ENCODE measurements at regions of chr1 and their contacts with region 1.

Region 1: GRCh38 chr1:22930235-22930912 is 42.3 kb downstream of the LACTBL1 start:
- DNase-seq: peak in 1 of 3 donors; percentile 15
- H3K4me3 ChIP-seq: no peak overlapping the region
- H3K4me3 Mint-ChIP-seq: no peak overlapping the region
- H3K27ac ChIP-seq: no peak overlapping the region
- H3K27ac Mint-ChIP-seq: no peak overlapping the region
- H3K4me1 ChIP-seq: no peaks in the 10 kb centered on the region
- H3K4me1 Mint-ChIP-seq: no peaks in the 10 kb centered on the region
- H3K27me3 ChIP-seq: no peaks in the 10 kb centered on the region
- H3K27me3 Mint-ChIP-seq: peaks cover 7 to 12% (median 10%) of the 10 kb centered on the region in 3 donors
- CTCF ChIP-seq: peak; percentile 74

Region 2: DNA sequence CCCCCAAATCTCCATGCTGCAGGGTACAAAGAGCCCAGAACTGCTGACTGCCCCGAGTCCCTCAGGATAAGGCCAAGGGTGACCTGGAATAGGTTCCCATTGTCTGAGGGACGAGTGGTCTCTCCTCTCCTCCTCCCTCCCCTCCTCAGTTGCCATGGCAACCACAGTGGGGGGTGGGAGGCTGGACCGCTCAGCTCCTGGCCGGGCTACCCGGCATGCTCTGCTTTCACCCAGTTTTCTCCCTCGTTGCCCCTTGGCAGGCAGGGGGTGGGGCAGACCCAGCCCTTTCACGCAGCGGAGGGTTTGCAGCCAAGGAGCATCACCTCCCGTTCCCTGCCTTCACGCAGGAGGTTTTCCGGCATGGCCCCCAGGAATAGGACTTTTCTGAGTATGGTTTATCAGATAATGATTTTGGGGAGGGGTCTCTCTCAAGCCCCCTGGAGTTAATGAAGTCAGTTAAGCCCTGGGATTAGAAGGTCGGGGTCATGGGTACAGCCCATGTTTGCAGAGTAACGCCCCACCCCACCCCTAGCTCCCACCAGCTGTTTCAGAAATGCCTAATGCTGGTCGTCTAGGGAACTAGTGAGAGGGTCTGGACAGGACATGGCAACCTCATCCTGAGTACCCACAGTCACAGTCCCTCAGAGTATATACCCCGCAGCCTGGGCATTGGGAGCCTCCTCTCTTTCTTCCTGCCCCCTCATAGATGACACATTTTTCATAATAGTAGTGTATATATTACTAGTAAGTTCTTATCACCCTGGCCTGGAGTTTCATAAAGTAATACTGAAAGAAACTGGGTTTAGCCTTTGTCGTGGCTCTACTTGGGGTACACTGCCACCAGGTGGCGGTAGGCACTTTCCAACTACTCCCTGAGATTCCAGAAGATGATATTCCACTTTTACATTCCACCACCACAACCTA is 256.6 kb before region 1 on chr1:
- intact Hi-C with region 1: loop called (anchors 1 to 2 kb)
- DNase-seq: peak; percentile 3 to 35 (median 16)
- H3K4me3 ChIP-seq: no peak overlapping the region
- H3K4me3 Mint-ChIP-seq: no peak overlapping the region
- H3K27ac ChIP-seq: no peak overlapping the region
- H3K27ac Mint-ChIP-seq: no peak overlapping the region
- H3K4me1 ChIP-seq: no peaks in the 10 kb centered on the region
- H3K4me1 Mint-ChIP-seq: no peaks in the 10 kb centered on the region
- H3K27me3 ChIP-seq: peaks cover 2% of the 10 kb centered on the region in 2 donors
- H3K27me3 Mint-ChIP-seq: peaks cover 6 to 16% (median 10%) of the 10 kb centered on the region in 3 donors
- CTCF ChIP-seq: peak; percentile 78

Region 3: GRCh38 chr1:22876359-22877111 is 53.8 kb before region 1 on chr1:
- intact Hi-C with region 1: no loop called
- DNase-seq: no peak
- H3K4me3 ChIP-seq: no peak overlapping the region
- H3K4me3 Mint-ChIP-seq: no peak overlapping the region
- H3K27ac ChIP-seq: no peak overlapping the region
- H3K27ac Mint-ChIP-seq: no peak overlapping the region
- H3K4me1 ChIP-seq: no peaks in the 10 kb centered on the region
- H3K4me1 Mint-ChIP-seq: no peaks in the 10 kb centered on the region
- H3K27me3 ChIP-seq: no peaks in the 10 kb centered on the region
- H3K27me3 Mint-ChIP-seq: peaks cover 0 to 4% (median 3%) of the 10 kb centered on the region in 3 donors
- CTCF ChIP-seq: no peak